Heart left ventricle (tissue), 16 donors: ENCODE measurements at regions of chr16 and their contacts with region 1.

Region 1: GRCh38 chr16:30761928-30762810 is at the starts of genes CFAP119 and RNF40:
- DNase-seq: peak; percentile 96 to 97 (median 97)
- ATAC-seq: peak; percentile 93 to 98 (median 94)
- H3K4me3 ChIP-seq: peak within 1 kb of the TSS; percentile 70 to 99 (median 92)
- H3K27ac ChIP-seq: peak within 1 kb of the TSS; percentile 48 to 97 (median 90)
- H3K4me1 ChIP-seq: peaks cover 0 to 48% (median 34%) of the 10 kb centered on the region in 12 donors
- H3K27me3 ChIP-seq: no peaks in the 10 kb centered on the region
- CTCF ChIP-seq: no peak
- POLR2A ChIP-seq: peak; percentile 57 to 88
- total RNA-seq, gene CFAP119: 0.48 to 1.8 (median 0.95) TPM
- total RNA-seq, gene RNF40: 29.3 to 62.0 (median 50.3) TPM

Region 2: GRCh38 chr16:30417529-30418349 is 344.4 kb before region 1 on chr16:
- intact Hi-C with region 1: no loop called
- DNase-seq: peak; percentile 84 to 93 (median 87)
- ATAC-seq: peak; percentile 89 to 96 (median 92)
- H3K4me3 ChIP-seq: peak overlapping the region; percentile 38 to 76 (median 64)
- H3K27ac ChIP-seq: peak overlapping the region; percentile 14 to 91 (median 77)
- H3K4me1 ChIP-seq: peaks cover 0 to 27% (median 10%) of the 10 kb centered on the region in 12 donors
- H3K27me3 ChIP-seq: no peaks in the 10 kb centered on the region
- CTCF ChIP-seq: peak in 7 of 12 donors; percentile 12 to 46 (median 28)
- POLR2A ChIP-seq: peak in 1 of 2 donors; percentile 45

Region 3: DNA sequence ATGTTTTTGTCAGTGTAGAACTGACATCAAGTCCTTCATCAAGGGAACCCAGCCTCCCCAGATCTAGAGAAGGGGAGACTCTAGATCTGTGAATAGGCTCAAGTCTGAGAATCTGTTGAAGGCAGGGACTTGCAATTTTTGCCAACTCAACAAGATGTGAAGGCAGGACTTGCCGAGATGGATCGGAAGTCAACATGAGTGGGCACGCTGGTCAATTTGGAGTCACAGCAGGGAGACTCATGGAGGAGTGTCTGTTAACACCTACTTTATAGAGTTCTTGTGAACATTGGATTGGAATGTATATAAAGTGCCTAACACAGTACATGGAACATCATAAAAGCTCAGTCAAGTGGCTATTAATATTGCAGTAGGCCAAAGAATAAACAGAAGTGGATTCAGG is 162.0 kb before region 1 on chr16:
- intact Hi-C with region 1: no loop called
- DNase-seq: no peak
- ATAC-seq: no peak
- H3K4me3 ChIP-seq: no peak overlapping the region
- H3K27ac ChIP-seq: no peak overlapping the region
- H3K4me1 ChIP-seq: peaks cover 0 to 36% (median 8%) of the 10 kb centered on the region in 12 donors
- H3K27me3 ChIP-seq: no peaks in the 10 kb centered on the region
- CTCF ChIP-seq: no peak
- POLR2A ChIP-seq: no peak

Region 4: GRCh38 chr16:30747799-30748634 is 14.2 kb before region 1 on chr16 and contains the start of gene PHKG2:
- intact Hi-C with region 1: loop called in 1 of 10 experiments (anchors 2 kb)
- DNase-seq: peak; percentile 99 to 100 (median 99)
- ATAC-seq: peak; percentile 98 to 99 (median 99)
- H3K4me3 ChIP-seq: peak within 1 kb of the TSS; percentile 64 to 97 (median 78)
- H3K27ac ChIP-seq: peak within 1 kb of the TSS in 11 of 12 donors; percentile 59 to 84 (median 75)
- H3K4me1 ChIP-seq: peaks cover 0 to 20% (median 5%) of the 10 kb centered on the region in 12 donors
- H3K27me3 ChIP-seq: no peaks in the 10 kb centered on the region
- CTCF ChIP-seq: no peak
- POLR2A ChIP-seq: peak in 1 of 2 donors; percentile 58
- total RNA-seq, gene PHKG2: 13.5 to 26.7 (median 17.9) TPM

Region 5: DNA sequence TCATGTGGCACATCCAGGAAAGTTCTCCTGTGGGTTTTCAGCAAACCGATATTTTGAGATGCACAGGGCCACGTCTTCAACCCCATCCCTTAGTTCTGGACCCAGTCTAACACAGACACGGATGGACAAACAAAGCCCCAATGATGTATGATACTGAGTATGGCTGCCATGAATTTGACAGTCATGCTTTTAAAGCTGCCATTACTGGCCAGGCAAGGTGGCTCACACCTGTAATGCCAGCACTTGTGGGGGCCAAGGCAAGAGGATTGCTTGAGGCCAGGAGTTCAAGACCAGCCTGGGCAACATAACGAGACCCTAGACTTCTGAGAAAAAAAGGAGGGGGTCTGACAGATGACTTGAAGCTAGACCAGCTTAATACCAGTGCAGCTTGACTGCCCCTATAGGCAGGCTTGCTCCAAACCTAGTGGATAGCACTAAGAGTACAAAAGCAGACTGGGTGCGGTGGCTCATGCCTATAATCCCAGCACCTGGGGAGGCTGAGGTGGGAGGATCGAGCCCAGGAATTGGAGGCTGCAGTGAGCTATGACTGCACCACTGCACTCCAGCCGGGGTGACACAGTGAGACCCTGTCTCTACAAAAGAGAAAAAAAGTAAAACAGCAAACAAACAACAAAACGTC is 35.6 kb after region 1 on chr16:
- intact Hi-C with region 1: loop called in 1 of 10 experiments (anchors 5 kb)
- DNase-seq: peak in 1 of 5 donors; percentile 5
- ATAC-seq: peak in 1 of 4 donors; percentile 22
- H3K4me3 ChIP-seq: no peak overlapping the region
- H3K27ac ChIP-seq: no peak overlapping the region
- H3K4me1 ChIP-seq: peaks cover 0 to 4% (median 0%) of the 10 kb centered on the region in 12 donors
- H3K27me3 ChIP-seq: no peaks in the 10 kb centered on the region
- CTCF ChIP-seq: no peak
- POLR2A ChIP-seq: no peak